HCT116 (cell line): ENCODE measurements at regions of chr3 and their contacts with region 1.

Region 1: GRCh38 chr3:30438126-30438525 is 168.3 kb upstream of the TGFBR2 start:
- DNase-seq: no peak
- ATAC-seq: no peak
- H3K4me3 ChIP-seq: no peak overlapping the region
- H3K27ac ChIP-seq: no peak overlapping the region
- H3K4me1 ChIP-seq: peaks cover 4 to 6% of the 10 kb centered on the region in 2 experiments; a peak in 2 of 4 replicates
- H3K27me3 ChIP-seq: no peaks in the 10 kb centered on the region
- CTCF ChIP-seq: no peak
- POLR2A ChIP-seq: no peak
- RAD21 ChIP-seq: no peak

Region 2: GRCh38 chr3:28853830-28854229 is 1584.3 kb before region 1 on chr3:
- CTCF ChIA-PET with region 1: no interaction called
- POLR2A ChIA-PET with region 1: no interaction called
- RAD21 ChIA-PET with region 1: no interaction called
- intact Hi-C with region 1: no loop called
- DNase-seq: no peak
- ATAC-seq: no peak
- H3K4me3 ChIP-seq: no peak overlapping the region
- H3K27ac ChIP-seq: no peak overlapping the region
- H3K4me1 ChIP-seq: no peaks in the 10 kb centered on the region
- H3K27me3 ChIP-seq: no peaks in the 10 kb centered on the region
- CTCF ChIP-seq: no peak; a peak in 1 of 6 replicates
- POLR2A ChIP-seq: no peak
- RAD21 ChIP-seq: peak; percentile 29

Region 3: GRCh38 chr3:30397030-30397429 is 41.1 kb before region 1 on chr3:
- CTCF ChIA-PET with region 1: no interaction called
- POLR2A ChIA-PET with region 1: no interaction called
- RAD21 ChIA-PET with region 1: no interaction called
- intact Hi-C with region 1: loop called (anchors 2 kb)
- DNase-seq: no peak
- ATAC-seq: no peak
- H3K4me3 ChIP-seq: no peak overlapping the region
- H3K27ac ChIP-seq: no peak overlapping the region
- H3K4me1 ChIP-seq: no peaks in the 10 kb centered on the region
- H3K27me3 ChIP-seq: no peaks in the 10 kb centered on the region
- CTCF ChIP-seq: no peak
- POLR2A ChIP-seq: no peak
- RAD21 ChIP-seq: no peak

Region 4: DNA sequence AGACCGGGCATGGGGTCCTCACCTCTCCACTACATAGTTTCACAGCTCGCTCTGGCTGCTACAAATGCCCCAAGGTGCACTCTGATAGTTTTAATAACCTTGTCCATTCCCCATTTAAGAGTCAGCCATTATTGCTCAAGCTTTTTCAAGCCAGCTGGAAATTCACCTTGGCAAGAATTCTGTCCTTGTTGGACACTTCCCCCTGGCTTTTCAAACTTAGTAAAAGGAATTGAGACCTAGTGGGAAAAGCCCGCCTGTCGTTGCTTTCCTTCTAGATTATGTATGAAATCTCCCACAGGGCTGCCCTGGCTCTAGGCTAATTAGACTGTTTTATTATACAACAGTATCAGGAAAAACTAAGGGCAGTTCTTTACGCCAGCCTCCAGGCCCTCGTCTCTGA is 750.0 kb after region 1 on chr3:
- CTCF ChIA-PET with region 1: no interaction called
- POLR2A ChIA-PET with region 1: no interaction called
- RAD21 ChIA-PET with region 1: no interaction called
- intact Hi-C with region 1: no loop called
- DNase-seq: no peak
- ATAC-seq: no peak
- H3K4me3 ChIP-seq: no peak overlapping the region
- H3K27ac ChIP-seq: no peak overlapping the region
- H3K4me1 ChIP-seq: no peaks in the 10 kb centered on the region
- H3K27me3 ChIP-seq: no peaks in the 10 kb centered on the region
- CTCF ChIP-seq: no peak
- POLR2A ChIP-seq: no peak
- RAD21 ChIP-seq: no peak